ENCODE measurements at regions of chr9 and their contacts with region 1.

Region 1: DNA sequence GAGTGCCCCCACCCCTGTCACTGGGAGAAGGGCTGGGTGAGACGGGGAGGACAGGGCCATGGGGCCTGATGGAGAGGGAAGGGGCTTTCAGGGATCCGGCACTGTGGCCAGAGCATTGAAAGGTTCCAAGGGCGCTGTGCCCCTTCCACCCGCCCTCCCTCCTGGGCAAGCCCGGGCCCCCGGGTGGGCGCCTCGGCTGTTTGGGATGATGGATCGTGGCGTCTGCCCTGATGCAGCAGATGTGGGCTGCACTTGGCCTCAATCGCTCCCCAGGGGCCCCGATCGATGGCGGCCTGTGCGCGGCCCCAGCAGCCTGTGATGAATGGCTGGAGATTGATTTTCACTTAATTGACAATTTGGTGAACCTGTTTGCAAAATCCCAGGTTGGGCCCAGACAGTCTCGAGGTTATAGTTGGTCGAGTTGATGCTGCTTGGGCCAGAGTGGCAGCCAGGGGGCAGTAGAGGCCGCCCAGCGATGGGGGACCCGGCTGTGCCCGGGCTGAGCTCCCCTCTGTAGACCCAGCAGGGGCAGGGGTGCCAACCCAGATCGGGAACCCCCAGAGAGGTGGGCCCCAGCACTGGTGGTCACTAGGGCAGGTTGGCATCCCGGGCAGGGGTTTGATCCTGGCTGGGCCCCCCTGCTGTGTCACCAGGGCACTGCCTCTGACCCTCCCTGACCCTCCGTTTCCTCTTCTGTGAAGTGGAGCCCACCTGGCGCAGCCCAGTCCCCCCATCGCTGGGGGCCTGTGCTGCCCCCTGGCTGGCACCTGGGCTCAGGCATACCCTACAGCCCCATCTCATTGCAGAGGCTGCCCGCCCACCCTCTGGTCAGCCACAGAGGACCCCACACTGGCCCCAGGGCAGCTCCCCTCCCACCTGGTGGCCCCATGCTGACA is 34.7 kb downstream of the LHX3 start:
- DNase-seq: peak; percentile 47
- H3K4me3 ChIP-seq: no peak overlapping the region
- H3K27ac ChIP-seq: no peak overlapping the region
- H3K4me1 ChIP-seq: no peaks in the 10 kb centered on the region
- H3K27me3 ChIP-seq: peaks cover 44% of the 10 kb centered on the region
- CTCF ChIP-seq: peak; percentile 44 to 57 (median 50)
- EP300 ChIP-seq: no peak
- POLR2A ChIP-seq: no peak

Region 2: DNA sequence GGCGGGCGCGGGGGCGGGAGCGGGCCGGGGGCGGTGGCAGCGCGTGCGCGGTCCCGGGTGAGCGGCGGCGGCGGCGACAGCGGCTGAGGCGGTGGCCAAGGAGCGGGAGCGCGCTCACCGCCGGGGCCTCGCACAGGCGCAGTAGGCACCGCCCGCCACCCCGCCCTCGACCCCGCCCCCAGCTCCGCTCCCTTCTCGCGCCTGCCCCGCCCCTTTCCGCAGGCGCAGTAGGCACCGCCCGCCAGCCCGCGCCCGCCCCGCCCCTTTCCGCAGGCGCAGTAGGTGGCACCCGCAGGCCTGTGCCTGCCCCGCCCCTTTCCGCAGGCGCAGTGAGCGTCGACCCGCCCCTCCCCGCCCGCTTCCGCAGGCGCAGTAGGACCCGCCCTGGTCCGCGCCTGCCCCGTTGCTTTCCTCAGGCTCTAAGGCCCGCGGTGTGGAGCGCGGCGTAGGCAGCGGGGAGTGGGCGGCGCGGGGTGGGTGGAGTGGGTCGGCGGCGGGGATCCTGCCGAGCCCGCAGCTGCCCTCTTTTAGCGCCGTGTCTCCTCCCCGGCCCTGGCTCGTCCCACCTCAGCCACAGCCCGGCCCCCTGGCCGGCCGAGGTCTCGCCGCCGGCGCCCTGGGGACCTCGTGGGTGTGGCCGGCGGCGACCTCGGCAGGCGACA is 262.7 kb before region 1 on chr9 and contains the start of gene CAMSAP1:
- in situ Hi-C with region 1: no loop called
- intact Hi-C with region 1: no loop called
- DNase-seq: peak; percentile 96
- H3K4me3 ChIP-seq: peak within 1 kb of the TSS; percentile 60 to 81 (median 78)
- H3K27ac ChIP-seq: peak within 1 kb of the TSS; percentile 81 to 90 (median 86)
- H3K4me1 ChIP-seq: peaks cover 18 to 43% (median 26%) of the 10 kb centered on the region in 4 donors
- H3K27me3 ChIP-seq: no peaks in the 10 kb centered on the region
- CTCF ChIP-seq: no peak
- EP300 ChIP-seq: no peak
- POLR2A ChIP-seq: peak; percentile 46
- total RNA-seq, gene CAMSAP1: 17.3 to 88.0 (median 23.8) TPM

Region 3: GRCh38 chr9:136283291-136284235 is 113.3 kb after region 1 on chr9:
- in situ Hi-C with region 1: loop called in 3 of 4 experiments (anchors 10 kb)
- intact Hi-C with region 1: loop called (anchors 10 kb)
- DNase-seq: peak; percentile 82
- H3K4me3 ChIP-seq: peak overlapping the region in 3 of 4 donors; percentile 6 to 31 (median 15)
- H3K27ac ChIP-seq: peak overlapping the region in 1 of 4 donors; percentile 32
- H3K4me1 ChIP-seq: peaks cover 5 to 8% (median 7%) of the 10 kb centered on the region in 4 donors
- H3K27me3 ChIP-seq: peaks cover 32% of the 10 kb centered on the region
- CTCF ChIP-seq: peak; percentile 73 to 84 (median 82)
- EP300 ChIP-seq: no peak
- POLR2A ChIP-seq: no peak

Measured in transverse colon (tissue), 4 donors.